Left cardiac atrium (tissue), 4 donors: ENCODE measurements at regions of chr1 and their contacts with region 1.

Region 1: GRCh38 chr1:8560611-8561544 is 243.0 kb downstream of the SLC45A1 start:
- DNase-seq: no peak
- ATAC-seq: peak; percentile 56

Region 2: GRCh38 chr1:8671306-8671917 is 110.5 kb after region 1 on chr1:
- intact Hi-C with region 1: loop called (anchors 2 to 5 kb)
- DNase-seq: no peak
- ATAC-seq: peak; percentile 70 to 73